ENCODE measurements at regions of chr1 and their contacts with region 1.

Region 1: GRCh38 chr1:36223993-36224536 is at the start of gene THRAP3:
- DNase-seq: peak; percentile 100
- ATAC-seq: peak; percentile 95 to 98 (median 96)
- H3K4me3 ChIP-seq: peak within 1 kb of the TSS; percentile 60 to 92 (median 83)
- H3K27ac ChIP-seq: peak within 1 kb of the TSS; percentile 91 to 99 (median 98)
- H3K4me1 ChIP-seq: peaks cover 0 to 46% (median 42%) of the 10 kb centered on the region in 12 donors
- H3K27me3 ChIP-seq: no peaks in the 10 kb centered on the region
- CTCF ChIP-seq: no peak
- POLR2A ChIP-seq: peak; percentile 75 to 87
- total RNA-seq, gene THRAP3: 68.6 to 106 (median 92.8) TPM

Region 2: DNA sequence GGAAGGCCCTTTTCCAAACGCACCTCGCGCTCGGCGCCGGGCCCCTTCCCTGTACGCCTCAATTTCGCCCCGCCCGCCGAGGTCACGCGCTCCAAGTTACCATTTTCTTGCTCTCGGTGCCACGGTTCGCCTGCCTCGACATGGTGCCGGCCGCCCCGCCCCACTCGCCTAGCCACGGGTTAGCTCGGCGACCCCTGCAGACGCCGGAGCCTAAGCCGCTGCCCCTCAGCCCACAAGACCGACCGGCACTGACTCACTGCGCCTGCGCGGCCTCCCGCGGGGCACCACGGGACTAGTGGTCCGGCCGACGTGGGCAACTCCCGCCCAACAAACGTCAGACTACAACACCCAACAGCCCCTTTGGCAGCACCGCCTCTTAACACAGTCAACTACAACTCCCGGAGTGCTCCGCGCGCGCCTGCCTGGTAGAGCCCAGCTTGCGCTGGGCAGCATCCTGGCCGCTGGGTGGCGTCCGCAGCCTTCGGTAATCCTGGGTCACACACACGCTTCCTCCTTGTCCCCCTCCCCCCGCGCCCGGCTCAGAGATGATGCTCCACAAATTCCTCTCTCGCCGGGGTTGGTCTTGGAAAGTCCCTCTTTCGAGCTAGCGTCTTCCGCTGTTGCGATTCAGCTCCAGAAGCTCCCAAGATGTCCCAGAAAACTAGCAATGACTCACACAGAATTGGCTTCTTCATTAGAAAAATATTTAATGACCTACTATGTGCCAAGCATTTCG is 74.7 kb before region 1 on chr1 and contains the start of gene TRAPPC3:
- intact Hi-C with region 1: loop called in 5 of 10 experiments (anchors 2 to 5 kb)
- DNase-seq: peak; percentile 100
- ATAC-seq: peak; percentile 90 to 95 (median 92)
- H3K4me3 ChIP-seq: peak within 1 kb of the TSS; percentile 57 to 98 (median 84)
- H3K27ac ChIP-seq: peak within 1 kb of the TSS; percentile 90 to 99 (median 96)
- H3K4me1 ChIP-seq: peaks cover 7 to 62% (median 48%) of the 10 kb centered on the region in 12 donors
- H3K27me3 ChIP-seq: no peaks in the 10 kb centered on the region
- CTCF ChIP-seq: peak; percentile 88 to 100 (median 96)
- POLR2A ChIP-seq: peak in 1 of 2 donors; percentile 93
- total RNA-seq, gene TRAPPC3: 45.3 to 77.2 (median 52.9) TPM

Region 3: GRCh38 chr1:36155408-36156328 is 68.4 kb before region 1 on chr1 and contains the start of gene MAP7D1:
- intact Hi-C with region 1: loop called in 6 of 10 experiments (anchors 2 to 5 kb)
- DNase-seq: peak; percentile 91 to 96 (median 92)
- ATAC-seq: peak; percentile 53 to 77 (median 72)
- H3K4me3 ChIP-seq: peak within 1 kb of the TSS; percentile 77 to 100 (median 98)
- H3K27ac ChIP-seq: peak within 1 kb of the TSS; percentile 86 to 100 (median 100)
- H3K4me1 ChIP-seq: peaks cover 21 to 79% (median 66%) of the 10 kb centered on the region in 12 donors
- H3K27me3 ChIP-seq: no peaks in the 10 kb centered on the region
- CTCF ChIP-seq: no peak
- POLR2A ChIP-seq: peak; percentile 78 to 90
- total RNA-seq, gene MAP7D1: 249 to 706 (median 328) TPM

Region 4: DNA sequence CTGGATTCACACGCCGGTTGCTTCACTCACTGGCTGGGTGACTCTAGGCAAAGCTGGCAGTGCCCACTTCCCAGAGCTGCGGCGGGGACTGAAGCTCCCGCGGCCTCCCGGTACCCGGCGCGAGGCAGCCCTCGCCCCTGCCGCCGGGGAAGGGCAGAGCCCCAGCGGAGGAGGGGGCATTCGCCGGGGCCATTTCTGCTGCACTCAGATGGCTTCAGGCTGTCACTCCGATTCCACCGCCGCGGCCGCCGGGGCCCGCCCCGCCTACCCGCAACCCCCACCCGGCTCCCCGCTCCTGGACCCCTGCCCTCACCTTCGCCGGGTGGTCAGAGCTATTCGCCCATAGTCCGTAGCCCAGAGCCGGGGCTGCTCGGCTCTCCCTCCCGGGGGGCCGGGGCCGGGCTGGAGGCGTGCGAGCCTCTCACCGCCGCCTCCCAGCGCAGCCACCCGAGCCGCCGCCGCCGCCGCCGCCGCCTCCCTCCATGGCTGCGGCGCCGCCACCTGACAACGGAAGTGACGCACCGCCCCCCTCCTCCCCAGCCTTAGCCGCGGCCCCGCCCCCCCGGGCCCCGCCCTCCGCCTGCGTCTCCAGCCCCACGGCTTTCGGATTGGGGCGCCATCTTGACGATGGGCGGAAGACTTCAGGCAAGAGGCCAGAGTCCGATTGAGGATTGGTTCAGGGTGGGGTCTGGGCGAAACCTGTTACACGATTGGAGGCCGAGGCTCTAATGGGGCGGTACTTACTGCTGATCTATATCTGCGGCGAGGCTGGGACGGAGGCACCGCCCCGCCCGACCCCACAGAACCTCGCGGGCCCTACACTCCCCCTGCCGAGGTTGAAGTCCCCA is 161.6 kb after region 1 on chr1 and contains the start of gene STK40:
- intact Hi-C with region 1: loop called in 1 of 10 experiments (anchors 10 kb)
- DNase-seq: peak; percentile 98 to 99 (median 99)
- ATAC-seq: peak; percentile 89 to 96 (median 94)
- H3K4me3 ChIP-seq: peak within 1 kb of the TSS; percentile 70 to 98 (median 91)
- H3K27ac ChIP-seq: peak within 1 kb of the TSS; percentile 93 to 99 (median 97)
- H3K4me1 ChIP-seq: peaks cover 10 to 84% (median 59%) of the 10 kb centered on the region in 12 donors
- H3K27me3 ChIP-seq: no peaks in the 10 kb centered on the region
- CTCF ChIP-seq: no peak
- POLR2A ChIP-seq: peak; percentile 76 to 92
- total RNA-seq, gene STK40: 50.4 to 114 (median 59.4) TPM

Region 5: DNA sequence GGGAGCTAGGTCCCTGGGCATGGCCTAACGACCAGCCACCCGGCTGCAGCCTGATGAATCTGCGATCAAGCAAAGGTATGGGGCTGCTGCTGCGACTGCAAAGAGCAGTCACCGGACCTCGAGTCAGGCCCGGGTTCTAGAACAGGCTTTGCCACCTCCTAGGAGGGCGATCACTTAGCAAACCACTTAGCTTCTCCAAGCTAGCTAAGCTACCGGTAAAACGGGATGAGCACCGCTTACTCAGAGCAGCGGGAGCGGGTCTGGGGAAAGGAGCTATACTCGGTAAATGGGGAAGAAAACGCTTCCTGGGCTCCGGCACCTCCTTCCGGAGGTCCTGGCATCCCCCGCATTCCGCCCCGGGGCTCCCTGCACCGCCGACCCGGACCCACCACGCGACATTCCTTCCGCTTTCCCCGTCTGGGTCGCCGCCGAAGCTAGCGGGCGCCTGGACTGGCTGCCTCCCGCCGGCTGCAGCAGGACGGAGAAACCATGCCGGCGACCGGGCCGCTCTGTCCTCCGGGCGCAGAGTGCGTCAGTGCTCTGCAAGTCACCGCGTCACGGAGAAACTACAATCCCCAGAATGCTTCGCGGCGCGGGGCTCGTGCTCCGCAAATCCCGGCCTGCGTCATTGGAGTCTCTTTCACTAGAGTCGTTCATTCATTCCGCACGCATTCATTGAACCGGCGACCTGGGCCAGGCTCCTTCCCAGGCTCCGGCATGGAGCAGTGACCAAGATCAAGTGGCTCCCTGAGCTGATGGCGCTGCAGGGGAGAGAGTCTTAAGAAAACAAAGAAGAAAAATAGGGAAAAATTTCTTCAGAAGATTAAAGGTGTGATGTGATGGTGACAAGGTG is 173.5 kb after region 1 on chr1 and contains the start of gene LSM10:
- intact Hi-C with region 1: loop called in 1 of 10 experiments (anchors 5 kb)
- DNase-seq: peak; percentile 95 to 96 (median 95)
- ATAC-seq: peak; percentile 94 to 98 (median 97)
- H3K4me3 ChIP-seq: peak within 1 kb of the TSS; percentile 60 to 99 (median 80)
- H3K27ac ChIP-seq: peak within 1 kb of the TSS; percentile 71 to 98 (median 90)
- H3K4me1 ChIP-seq: peaks cover 0 to 44% (median 14%) of the 10 kb centered on the region in 12 donors
- H3K27me3 ChIP-seq: no peaks in the 10 kb centered on the region
- CTCF ChIP-seq: peak in 3 of 12 donors; percentile 6 to 21 (median 20)
- POLR2A ChIP-seq: peak in 1 of 2 donors; percentile 93
- total RNA-seq, gene LSM10: 39.1 to 68.7 (median 49.7) TPM